ENCODE measurements at regions of chr1 and their contacts with region 1.

Region 1: DNA sequence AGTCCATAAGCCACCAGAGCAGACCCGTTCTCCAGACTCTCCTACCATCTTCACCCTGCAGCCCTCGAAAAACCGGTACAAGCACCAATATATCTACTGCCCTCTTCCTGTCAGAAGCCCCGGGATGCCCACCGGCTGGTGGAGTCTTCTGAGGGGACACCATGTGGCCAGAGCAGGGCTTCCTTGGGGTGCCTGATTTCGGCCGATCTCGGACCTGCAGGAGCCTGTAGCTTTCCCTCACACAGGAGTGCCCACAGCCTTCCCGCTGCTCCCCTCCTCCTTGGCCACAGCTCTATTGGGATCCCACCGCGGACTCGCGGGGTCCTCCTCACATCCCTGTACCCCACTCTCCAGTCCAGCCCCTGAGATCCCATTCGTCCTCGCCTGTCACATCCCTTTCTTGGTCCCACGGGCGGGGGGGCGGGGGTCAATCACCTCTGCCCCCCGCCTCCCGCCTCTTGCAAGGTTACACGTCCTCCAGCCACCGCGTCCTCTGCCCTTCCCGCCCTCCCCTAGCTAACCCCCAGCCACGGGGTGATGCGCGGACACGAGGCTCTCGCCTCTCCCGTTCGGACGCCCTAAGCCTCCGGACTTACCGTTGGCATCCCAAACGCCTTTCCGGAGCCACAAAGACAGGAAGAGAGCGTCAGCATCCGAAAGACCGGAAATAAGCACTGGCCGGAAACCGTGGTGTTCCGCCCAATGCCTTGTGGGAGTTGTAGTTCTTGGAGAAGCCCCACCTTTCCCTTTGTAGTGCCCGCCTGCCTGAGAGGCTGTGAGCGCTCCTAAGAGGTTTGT is at the start of gene SSR2:
- DNase-seq: peak; percentile 91 to 96 (median 94)
- ATAC-seq: peak; percentile 99
- H3K4me3 ChIP-seq: peak within 1 kb of the TSS; percentile 72
- H3K27ac ChIP-seq: peak within 1 kb of the TSS; percentile 65
- H3K4me1 ChIP-seq: peaks cover 7 to 8% of the 10 kb centered on the region in 2 experiments; a peak in 4 of 5 replicates
- H3K27me3 ChIP-seq: no peaks in the 10 kb centered on the region
- CTCF ChIP-seq: no peak
- EP300 ChIP-seq: no peak
- POLR2A ChIP-seq: peak; percentile 84
- RAD21 ChIP-seq: no peak
- polyA plus RNA-seq, gene SSR2: 370 to 392 TPM

Region 2: DNA sequence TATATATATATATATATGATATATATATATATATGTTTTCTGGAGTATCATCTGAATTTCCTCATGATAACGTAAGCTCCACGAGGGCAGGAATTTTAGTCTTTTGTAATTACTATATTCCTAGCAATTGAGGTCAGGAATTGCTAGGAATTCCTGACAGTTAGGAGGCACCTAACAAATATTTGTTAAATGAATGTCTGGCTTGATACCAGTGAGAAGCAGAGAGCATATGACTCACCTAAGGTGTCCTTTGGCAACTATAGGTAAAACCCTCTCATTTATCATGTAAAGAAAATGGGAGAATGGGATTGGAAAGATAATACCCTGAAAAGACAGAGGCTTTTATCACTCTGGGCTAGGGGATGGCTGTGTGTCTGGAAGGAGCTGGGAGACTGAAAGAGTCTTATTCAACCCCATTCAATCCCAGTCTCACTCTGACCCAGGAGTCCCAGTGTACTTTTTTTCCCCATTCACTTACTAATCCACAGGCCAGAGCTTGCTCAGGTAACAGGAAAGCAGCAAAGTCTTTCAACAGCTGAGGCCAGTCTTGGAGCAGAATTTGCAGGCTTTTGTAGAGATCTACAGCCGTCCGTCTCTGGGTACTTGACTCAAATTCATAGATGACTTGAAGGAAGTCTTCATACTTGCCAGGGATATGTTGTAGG is 260.4 kb before region 1 on chr1:
- CTCF ChIA-PET with region 1: no interaction called
- POLR2A ChIA-PET with region 1: no interaction called
- in situ Hi-C with region 1: no loop called
- intact Hi-C with region 1: no loop called
- DNase-seq: no peak
- ATAC-seq: no peak
- H3K4me3 ChIP-seq: no peak overlapping the region
- H3K27ac ChIP-seq: no peak overlapping the region
- H3K4me1 ChIP-seq: no peaks in the 10 kb centered on the region; a peak in 2 of 5 replicates
- H3K27me3 ChIP-seq: no peaks in the 10 kb centered on the region
- CTCF ChIP-seq: no peak
- EP300 ChIP-seq: no peak
- POLR2A ChIP-seq: no peak
- RAD21 ChIP-seq: no peak

Region 3: DNA sequence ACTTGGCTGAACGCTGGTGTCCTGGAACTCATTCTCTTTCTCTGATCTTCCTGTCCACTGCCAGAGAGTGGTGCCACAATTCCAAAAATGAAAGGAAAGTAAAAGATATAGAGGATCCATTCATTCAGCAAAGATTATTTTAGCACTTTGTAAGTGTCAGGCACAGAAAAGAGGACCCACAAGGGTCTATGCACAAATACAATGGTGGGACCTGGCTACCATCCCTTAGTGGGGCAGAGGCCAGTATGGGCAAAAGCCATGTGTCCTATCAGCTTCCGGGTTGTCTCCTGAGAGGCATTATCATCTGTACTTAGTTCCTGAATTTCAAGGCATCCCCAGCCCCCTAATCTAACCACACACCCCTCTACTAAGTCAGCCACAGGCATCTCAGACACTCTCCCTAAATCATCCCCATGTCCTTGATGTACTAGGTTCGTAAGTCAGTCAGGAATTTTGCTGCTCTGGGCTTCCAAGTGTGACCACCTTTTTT is 18.8 kb before region 1 on chr1:
- CTCF ChIA-PET with region 1: no interaction called
- POLR2A ChIA-PET with region 1: interaction called, 19 read pairs
- in situ Hi-C with region 1: no loop called
- intact Hi-C with region 1: no loop called
- DNase-seq: peak in 2 of 4 experiments; percentile 50 to 53
- ATAC-seq: peak; percentile 60
- H3K4me3 ChIP-seq: no peak overlapping the region
- H3K27ac ChIP-seq: peak overlapping the region; percentile 68
- H3K4me1 ChIP-seq: peaks cover 22 to 34% of the 10 kb centered on the region in 2 experiments; a peak in 4 of 5 replicates
- H3K27me3 ChIP-seq: no peaks in the 10 kb centered on the region
- CTCF ChIP-seq: peak in 2 of 3 experiments; percentile 5 to 25; a peak in 2 of 6 replicates
- EP300 ChIP-seq: no peak
- POLR2A ChIP-seq: no peak
- RAD21 ChIP-seq: peak in 1 of 2 experiments; percentile 22; a peak in 1 of 4 replicates

Region 4: DNA sequence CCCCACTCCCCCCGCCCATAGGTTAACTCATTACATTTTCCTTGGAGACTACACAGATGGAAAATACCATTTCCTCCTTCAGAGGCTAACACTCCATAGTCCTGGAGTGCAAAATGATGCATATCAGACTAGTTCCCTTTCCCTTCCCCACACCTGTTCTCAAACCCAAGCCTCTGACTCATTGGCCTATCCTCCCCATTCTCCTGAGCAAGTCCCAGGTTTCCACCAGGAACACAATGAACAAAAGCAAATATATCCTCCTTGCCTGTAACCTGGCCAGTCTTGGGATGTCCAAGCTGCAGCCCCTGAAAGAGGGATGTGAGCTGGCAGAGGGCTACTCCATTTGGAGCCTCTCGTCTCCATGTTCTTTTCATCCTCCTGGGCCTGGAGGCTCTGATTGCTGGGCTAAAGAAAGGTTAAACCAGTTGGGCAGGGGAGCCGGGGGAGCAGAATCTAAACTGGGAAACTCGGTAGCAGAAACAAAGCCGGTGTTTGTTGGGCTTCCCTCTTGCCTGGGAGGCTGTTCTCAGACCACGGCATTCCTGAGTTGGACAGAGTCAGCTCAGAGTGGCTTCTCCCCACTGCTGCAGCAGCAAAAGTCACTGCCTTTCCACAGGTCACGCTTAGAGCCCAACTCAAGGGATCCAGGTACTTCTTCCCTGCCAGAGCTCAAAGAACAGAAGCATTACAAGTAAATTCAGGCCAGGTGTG is 13.7 kb before region 1 on chr1:
- CTCF ChIA-PET with region 1: no interaction called
- POLR2A ChIA-PET with region 1: interaction called, 19 read pairs
- in situ Hi-C with region 1: no loop called
- intact Hi-C with region 1: no loop called
- DNase-seq: no peak
- ATAC-seq: no peak
- H3K4me3 ChIP-seq: no peak overlapping the region
- H3K27ac ChIP-seq: no peak overlapping the region
- H3K4me1 ChIP-seq: peaks cover 14 to 21% of the 10 kb centered on the region in 2 experiments; a peak in 4 of 5 replicates
- H3K27me3 ChIP-seq: no peaks in the 10 kb centered on the region
- CTCF ChIP-seq: no peak
- EP300 ChIP-seq: no peak
- POLR2A ChIP-seq: no peak
- RAD21 ChIP-seq: no peak

Region 5: DNA sequence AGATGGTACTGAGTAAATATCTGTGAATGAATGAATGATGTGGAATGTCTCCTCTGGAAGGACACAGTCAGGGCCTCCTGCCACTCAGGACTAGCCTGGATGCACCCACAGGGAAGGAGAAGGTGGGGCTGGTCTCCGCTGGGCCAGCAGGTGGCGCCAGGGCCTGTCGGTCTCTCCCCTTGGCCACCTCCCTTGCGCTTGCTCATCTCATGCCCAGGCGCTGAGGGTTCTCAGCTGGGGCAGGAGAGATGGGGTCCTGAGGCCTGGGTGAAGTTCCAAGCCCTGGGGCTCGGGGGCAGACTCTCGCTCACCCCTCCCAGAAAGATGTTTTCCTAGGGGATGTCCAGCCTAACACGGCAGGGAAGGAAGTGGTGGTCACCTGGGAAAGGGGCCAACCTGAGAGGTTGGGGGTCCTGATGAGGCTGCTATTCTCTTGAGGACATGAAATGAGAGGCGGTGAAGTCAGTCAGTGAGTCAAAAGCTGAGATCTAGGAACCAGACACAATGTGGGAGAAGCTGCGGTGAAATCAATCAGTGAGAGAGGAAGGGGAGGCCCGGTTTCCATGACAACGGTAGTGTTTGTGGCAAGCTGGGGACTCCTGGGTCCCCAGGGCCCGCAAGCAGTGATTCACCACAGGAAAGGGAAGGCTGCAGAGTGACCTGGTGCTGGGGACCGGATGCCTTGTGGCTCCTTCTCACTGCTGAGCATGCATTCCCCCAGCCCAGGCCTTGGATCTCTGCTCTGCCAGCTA is 76.3 kb after region 1 on chr1:
- CTCF ChIA-PET with region 1: no interaction called
- POLR2A ChIA-PET with region 1: no interaction called
- in situ Hi-C with region 1: no loop called
- intact Hi-C with region 1: no loop called
- DNase-seq: peak; percentile 86 to 88 (median 86)
- ATAC-seq: peak; percentile 100
- H3K4me3 ChIP-seq: no peak overlapping the region
- H3K27ac ChIP-seq: no peak overlapping the region
- H3K4me1 ChIP-seq: peaks cover 0 to 3% of the 10 kb centered on the region in 2 experiments; a peak in 2 of 5 replicates
- H3K27me3 ChIP-seq: no peaks in the 10 kb centered on the region
- CTCF ChIP-seq: peak; percentile 94 to 98 (median 95)
- EP300 ChIP-seq: no peak
- POLR2A ChIP-seq: no peak
- RAD21 ChIP-seq: peak; percentile 98 to 100